Activated B cell treated with CpG ODN at 0.5 μM for 24 hours (primary cell): ENCODE measurements at regions of chr17 and their contacts with region 1.

Region 1: GRCh38 chr17:31877911-31878702 is 19.1 kb upstream of the COPRS start:
- DNase-seq: no peak
- ATAC-seq: no peak
- H3K4me3 Mint-ChIP-seq: no peak overlapping the region
- H3K27ac Mint-ChIP-seq: no peak overlapping the region
- H3K4me1 Mint-ChIP-seq: peaks cover 18% of the 10 kb centered on the region
- H3K27me3 Mint-ChIP-seq: no peaks in the 10 kb centered on the region
- CTCF ChIP-seq: no peak

Region 2: GRCh38 chr17:31900877-31901276 is 22.8 kb after region 1 on chr17:
- CTCF ChIA-PET with region 1: interaction called, 4 read pairs
- POLR2A ChIA-PET with region 1: interaction called, 27 read pairs
- intact Hi-C with region 1: loop called (anchors 2 kb)
- DNase-seq: no peak
- ATAC-seq: no peak
- H3K4me3 Mint-ChIP-seq: no peak overlapping the region
- H3K27ac Mint-ChIP-seq: no peak overlapping the region
- H3K4me1 Mint-ChIP-seq: peaks cover 11% of the 10 kb centered on the region
- H3K27me3 Mint-ChIP-seq: no peaks in the 10 kb centered on the region
- CTCF ChIP-seq: no peak

Region 3: DNA sequence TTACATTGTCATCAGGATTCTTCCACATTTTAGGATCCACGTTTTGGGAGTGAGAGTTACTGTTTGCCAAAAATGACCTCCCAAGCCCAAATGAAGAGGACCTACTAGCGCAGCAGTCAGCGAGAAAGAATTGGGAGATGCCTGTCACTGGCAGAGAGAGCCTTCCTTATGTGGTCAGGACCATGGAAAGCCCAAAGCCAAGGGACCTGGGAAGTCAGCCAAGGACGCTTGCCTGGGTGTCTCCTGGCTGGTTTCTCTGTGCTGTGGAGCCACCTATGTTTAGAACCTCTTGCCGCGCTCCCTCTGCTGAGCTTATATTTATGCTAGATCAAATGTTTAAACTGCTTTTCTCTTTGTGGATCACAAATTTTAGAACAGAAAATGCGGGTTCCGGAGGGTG is 362.6 kb after region 1 on chr17:
- CTCF ChIA-PET with region 1: no interaction called
- POLR2A ChIA-PET with region 1: interaction called, 11 read pairs
- intact Hi-C with region 1: no loop called
- DNase-seq: no peak
- ATAC-seq: no peak
- H3K4me3 Mint-ChIP-seq: no peak overlapping the region
- H3K27ac Mint-ChIP-seq: no peak overlapping the region
- H3K4me1 Mint-ChIP-seq: no peaks in the 10 kb centered on the region
- H3K27me3 Mint-ChIP-seq: no peaks in the 10 kb centered on the region
- CTCF ChIP-seq: no peak